HepG2 (cell line): ENCODE measurements at regions of chr12 and their contacts with region 1.

Region 1: GRCh38 chr12:49121047-49121696 is 10.0 kb downstream of the TUBA1B start:
- DNase-seq: peak; percentile 79
- ATAC-seq: peak; percentile 72
- H3K4me3 ChIP-seq: no peak overlapping the region
- H3K27ac ChIP-seq: no peak overlapping the region
- H3K4me1 ChIP-seq: peaks cover 9% of the 10 kb centered on the region
- H3K27me3 ChIP-seq: peaks cover 0 to 9% of the 10 kb centered on the region in 2 experiments; a peak in 2 of 5 replicates
- CTCF ChIP-seq: peak; percentile 88
- EP300 ChIP-seq: no peak
- POLR2A ChIP-seq: no peak
- RAD21 ChIP-seq: peak; percentile 51; the same call in 1 of the 2 replicates

Region 2: DNA sequence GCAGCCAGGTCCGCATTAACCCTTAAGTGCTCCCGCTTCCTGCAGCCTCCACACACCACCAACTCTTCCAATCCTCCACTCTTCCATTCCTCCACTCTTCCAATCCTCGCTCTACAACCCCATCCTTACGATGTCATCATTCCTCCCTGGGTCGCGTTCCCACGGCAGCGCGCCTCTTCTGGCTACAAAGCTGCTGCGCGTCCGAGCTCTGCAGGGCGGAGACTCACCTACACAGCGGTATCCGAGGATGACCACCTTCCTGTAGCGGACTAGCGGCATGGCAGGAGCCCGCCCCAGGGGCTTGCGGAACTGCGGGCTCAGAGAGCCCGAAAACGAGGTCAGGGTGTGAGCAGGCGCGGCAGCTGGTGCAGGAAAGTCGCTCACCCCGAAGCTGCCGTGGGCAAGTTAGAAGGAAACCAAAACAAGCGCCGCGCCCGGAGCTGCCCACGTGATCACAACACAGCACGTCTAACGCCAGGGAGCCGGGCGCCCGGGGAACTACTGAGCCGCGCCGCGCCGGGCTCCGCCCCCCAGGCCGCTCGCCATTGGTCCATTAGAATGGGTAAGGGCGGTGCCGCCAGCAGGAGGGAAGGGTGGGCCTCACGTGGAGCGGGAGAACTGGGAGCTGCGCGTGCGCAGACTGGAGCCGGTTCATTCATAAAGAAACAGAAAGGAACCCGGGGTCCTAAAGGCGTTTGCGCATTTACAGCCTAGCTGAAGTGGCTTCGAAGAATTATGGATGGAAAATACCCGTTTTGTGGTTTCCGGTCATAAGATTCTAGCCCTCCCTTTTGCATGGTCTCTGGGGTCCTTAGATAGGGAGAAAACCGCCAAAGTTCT is 51.4 kb before region 1 on chr12 and contains the start of gene RHEBL1:
- CTCF ChIA-PET with region 1: no interaction called
- POLR2A ChIA-PET with region 1: interaction called, 5 read pairs
- in situ Hi-C with region 1: loop called (anchors 5 kb)
- intact Hi-C with region 1: loop called (anchors 2 kb)
- DNase-seq: peak; percentile 94
- ATAC-seq: peak; percentile 99
- H3K4me3 ChIP-seq: peak within 1 kb of the TSS; percentile 73 to 85 (median 80)
- H3K27ac ChIP-seq: peak within 1 kb of the TSS; percentile 54
- H3K4me1 ChIP-seq: peaks cover 24% of the 10 kb centered on the region
- H3K27me3 ChIP-seq: no peaks in the 10 kb centered on the region
- CTCF ChIP-seq: peak; percentile 56
- EP300 ChIP-seq: no peak
- POLR2A ChIP-seq: peak in 1 of 2 experiments; percentile 50; a peak in 2 of 4 replicates
- RAD21 ChIP-seq: 0 out of 2 replicates have a peak, but pooled peaks have one; percentile 11
- total RNA-seq, gene RHEBL1: 1.4 and 1.6 TPM in 2 replicates

Region 3: DNA sequence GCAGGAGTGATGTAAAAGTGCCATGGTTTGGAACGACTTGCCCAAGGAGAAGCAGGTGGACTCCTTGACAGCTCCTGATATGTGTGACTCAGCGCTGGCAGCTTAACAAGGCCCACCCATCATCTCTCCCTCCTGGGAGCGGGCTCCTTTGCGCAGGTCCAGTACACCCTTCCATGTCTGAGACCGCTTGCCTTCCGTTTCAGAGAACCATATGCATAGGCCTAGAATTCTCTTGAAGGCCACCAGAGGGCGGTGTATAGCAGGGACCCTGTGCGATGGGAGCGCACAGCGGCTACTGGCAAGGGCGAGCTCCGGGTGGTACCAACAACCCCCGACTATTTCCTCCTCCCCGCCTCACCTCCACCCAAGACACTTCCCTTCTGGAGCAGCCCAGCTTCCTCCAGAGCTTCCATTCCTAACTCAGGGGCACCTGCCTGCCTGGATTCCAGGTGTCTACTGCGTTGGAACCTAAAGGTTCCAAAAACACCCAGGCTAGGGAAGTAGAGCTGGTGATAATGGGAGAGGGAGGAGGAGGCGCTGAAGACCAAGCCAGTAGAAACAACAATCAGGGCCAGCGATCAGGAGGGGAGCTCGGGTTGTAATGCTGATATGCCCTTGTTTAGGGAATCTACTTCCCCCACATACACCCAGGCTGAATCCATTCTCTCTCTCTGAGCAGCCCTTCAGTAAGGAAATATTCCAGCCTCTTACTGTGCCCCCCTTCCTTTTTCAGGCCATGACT is 32.8 kb before region 1 on chr12:
- CTCF ChIA-PET with region 1: interaction called, 30 read pairs
- POLR2A ChIA-PET with region 1: interaction called, 10 read pairs
- in situ Hi-C with region 1: no loop called
- intact Hi-C with region 1: loop called (anchors 1 kb)
- DNase-seq: peak; percentile 73
- ATAC-seq: peak; percentile 84
- H3K4me3 ChIP-seq: peak overlapping the region in 1 of 3 experiments; percentile 36; a peak in 1 of 6 replicates
- H3K27ac ChIP-seq: no peak overlapping the region
- H3K4me1 ChIP-seq: peaks cover 47% of the 10 kb centered on the region
- H3K27me3 ChIP-seq: peaks cover 9 to 54% of the 10 kb centered on the region in 2 experiments; a peak in 4 of 5 replicates
- CTCF ChIP-seq: peak; percentile 92
- EP300 ChIP-seq: no peak
- POLR2A ChIP-seq: no peak
- RAD21 ChIP-seq: peak; percentile 72